HEK293 (cell line): ENCODE measurements at regions of chr11 and their contacts with region 1.

Region 1: GRCh38 chr11:74702383-74703007 is 28.7 kb downstream of the CHRDL2 start:
- H3K4me3 ChIP-seq: no peak overlapping the region
- H3K27ac ChIP-seq: no peak overlapping the region
- H3K4me1 ChIP-seq: no peaks in the 10 kb centered on the region
- CTCF ChIP-seq: peak; percentile 59; the same call in 1 of the 2 replicates

Region 2: GRCh38 chr11:74634537-74634936 is 68.0 kb before region 1 on chr11:
- CTCF ChIA-PET with region 1: interaction called, 10 read pairs
- POLR2A ChIA-PET with region 1: no interaction called
- H3K4me3 ChIP-seq: no peak overlapping the region
- H3K27ac ChIP-seq: no peak overlapping the region
- H3K4me1 ChIP-seq: peaks cover 9% of the 10 kb centered on the region
- CTCF ChIP-seq: no peak

Region 3: GRCh38 chr11:74672956-74673692 is 29.4 kb before region 1 on chr11:
- CTCF ChIA-PET with region 1: interaction called, 10 read pairs
- POLR2A ChIA-PET with region 1: interaction called, 5 read pairs
- H3K4me3 ChIP-seq: no peak overlapping the region
- H3K27ac ChIP-seq: no peak overlapping the region
- H3K4me1 ChIP-seq: no peaks in the 10 kb centered on the region
- CTCF ChIP-seq: no peak

Region 4: DNA sequence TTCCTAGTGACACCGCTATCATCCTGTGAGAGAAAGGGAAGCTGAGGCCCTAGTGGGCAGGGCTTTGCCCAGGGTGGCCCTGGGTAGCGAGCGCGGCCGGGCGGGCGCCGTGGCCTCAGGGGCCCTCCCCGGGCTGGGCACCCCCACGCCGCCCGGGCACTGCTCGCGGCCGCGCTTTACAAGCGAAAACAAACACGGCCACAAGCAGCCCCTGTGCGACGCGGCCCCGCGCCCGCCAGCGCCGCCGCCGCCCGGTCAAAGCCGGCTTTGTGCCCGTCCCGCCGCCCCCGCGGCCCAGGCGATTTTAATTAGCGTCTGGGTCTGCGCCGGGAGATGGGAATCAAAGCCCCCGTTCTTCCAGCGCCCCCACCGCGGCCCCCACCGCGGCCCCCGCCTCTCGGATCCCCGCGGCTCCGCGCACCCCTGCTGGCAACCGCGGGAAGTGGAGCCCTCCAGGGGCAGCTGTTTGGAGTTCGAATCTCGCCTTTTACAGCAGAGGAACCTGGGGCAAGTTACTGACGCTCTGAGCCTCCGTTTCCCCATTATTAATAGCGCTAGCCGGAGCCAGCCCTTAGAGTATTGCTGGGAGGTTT is 19.1 kb before region 1 on chr11:
- CTCF ChIA-PET with region 1: interaction called, 10 read pairs
- POLR2A ChIA-PET with region 1: no interaction called
- H3K4me3 ChIP-seq: no peak overlapping the region
- H3K27ac ChIP-seq: no peak overlapping the region
- H3K4me1 ChIP-seq: no peaks in the 10 kb centered on the region
- CTCF ChIP-seq: no peak

Region 5: DNA sequence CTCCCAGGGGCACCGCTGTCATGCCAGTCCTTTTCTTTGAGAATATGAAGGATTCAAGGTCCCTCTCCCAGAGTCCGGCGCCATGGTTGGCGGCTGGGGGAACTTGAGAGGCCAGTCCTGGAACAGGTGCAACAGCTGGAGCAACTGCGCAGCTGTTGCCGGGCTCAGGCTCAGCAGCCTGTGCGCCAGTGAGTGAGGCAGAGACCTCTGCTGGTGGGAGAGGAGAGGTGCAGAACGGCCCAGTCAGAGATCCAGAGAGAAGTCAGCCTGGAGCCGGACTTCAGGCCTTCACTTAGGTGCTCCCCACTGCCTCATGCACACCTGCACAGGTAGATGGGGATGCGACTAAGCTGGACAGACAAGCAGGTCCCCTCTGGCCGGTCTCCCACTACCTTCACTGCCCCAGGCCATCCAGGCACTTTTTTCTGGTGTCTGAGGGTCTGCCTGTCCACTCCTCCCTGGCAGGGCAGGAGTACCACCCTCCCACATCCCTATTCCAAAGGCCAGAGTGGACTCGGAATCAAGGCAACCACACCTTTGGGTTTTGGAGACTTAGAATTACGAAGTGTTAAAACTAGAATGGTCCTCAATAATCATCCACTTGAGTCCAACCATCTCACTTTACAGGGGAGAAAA is 24.2 kb after region 1 on chr11:
- CTCF ChIA-PET with region 1: interaction called, 103 read pairs
- POLR2A ChIA-PET with region 1: no interaction called
- H3K4me3 ChIP-seq: no peak overlapping the region
- H3K27ac ChIP-seq: no peak overlapping the region
- H3K4me1 ChIP-seq: no peaks in the 10 kb centered on the region
- CTCF ChIP-seq: peak; percentile 81

Region 6: DNA sequence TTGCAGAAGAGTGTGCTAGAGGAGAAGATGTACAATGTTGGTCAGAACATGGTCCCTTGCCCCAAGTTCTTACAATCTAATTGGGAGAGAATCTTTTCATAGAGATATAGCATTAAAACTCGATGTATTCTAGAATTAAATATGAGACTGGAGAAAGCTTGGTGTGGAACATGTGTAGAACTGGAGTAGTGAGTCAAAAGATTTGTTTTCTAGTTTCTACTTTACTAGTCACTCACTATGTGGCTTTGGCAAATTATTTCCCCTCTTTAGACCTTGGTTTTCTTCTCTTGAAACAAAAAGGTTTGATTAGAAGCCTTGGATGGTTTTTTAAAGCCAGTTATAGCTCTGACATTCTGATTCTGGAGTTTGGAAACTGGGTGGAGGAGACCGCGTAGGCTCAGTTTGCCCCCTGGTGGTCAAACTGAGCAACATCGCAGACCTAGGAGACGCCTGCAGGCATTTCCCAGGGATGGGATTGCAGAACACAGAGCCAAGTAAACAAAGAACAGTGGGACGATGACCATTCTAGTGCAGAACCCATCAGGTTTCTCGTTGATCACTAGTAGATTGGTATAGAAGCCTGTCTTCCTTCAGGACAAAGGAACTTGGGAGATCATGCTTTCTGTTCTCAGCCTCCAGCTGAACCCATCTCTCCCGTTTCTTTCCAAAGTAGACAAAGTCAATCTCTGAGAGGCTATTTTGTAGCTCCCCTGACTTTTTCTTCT is 37.2 kb after region 1 on chr11:
- CTCF ChIA-PET with region 1: interaction called, 19 read pairs
- POLR2A ChIA-PET with region 1: no interaction called
- H3K4me3 ChIP-seq: no peak overlapping the region
- H3K27ac ChIP-seq: no peak overlapping the region
- H3K4me1 ChIP-seq: no peaks in the 10 kb centered on the region
- CTCF ChIP-seq: peak; percentile 44; the same call in 1 of the 2 replicates

Region 7: DNA sequence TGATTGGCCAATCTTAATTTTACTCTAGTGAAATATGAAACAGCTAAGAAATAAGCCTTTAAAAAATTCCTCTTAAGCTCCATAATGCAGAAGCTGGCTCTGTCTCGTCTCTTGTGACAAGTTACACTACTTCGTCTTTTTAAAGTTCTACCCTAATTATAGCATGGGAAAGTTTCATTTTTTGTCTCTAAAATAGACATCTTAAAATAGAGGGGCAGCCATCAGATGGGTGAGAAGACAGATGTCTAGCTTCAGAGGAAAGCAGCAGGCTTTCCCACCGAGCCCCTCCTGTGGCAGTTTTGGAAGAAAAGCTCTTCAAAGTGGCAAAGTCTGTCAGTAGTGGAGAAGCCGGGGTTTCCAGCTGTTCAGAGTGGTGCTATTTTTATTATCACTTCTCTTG is 206.9 kb after region 1 on chr11:
- CTCF ChIA-PET with region 1: no interaction called
- POLR2A ChIA-PET with region 1: no interaction called
- H3K4me3 ChIP-seq: no peak overlapping the region
- H3K27ac ChIP-seq: no peak overlapping the region
- H3K4me1 ChIP-seq: no peaks in the 10 kb centered on the region
- CTCF ChIP-seq: no peak